Activated CD4-positive, alpha-beta T cell treated with anti-CD3 and anti-CD28 coated beads, Interleukin-2, amount 10 ng/mL, durations not matched to agents 24 days and 14 days (primary cell): ENCODE measurements at regions of chr4 and their contacts with region 1.

Region 1: GRCh38 chr4:54233277-54233696 is 4.2 kb downstream of the PDGFRA start:
- DNase-seq: peak; percentile 92
- H3K4me3 Mint-ChIP-seq: peak overlapping the region; percentile 75
- H3K27ac Mint-ChIP-seq: no peak overlapping the region
- H3K4me1 Mint-ChIP-seq: peaks cover 14% of the 10 kb centered on the region
- H3K27me3 Mint-ChIP-seq: peaks cover 55% of the 10 kb centered on the region

Region 2: GRCh38 chr4:52545099-52546069 is 1687.9 kb before region 1 on chr4:
- intact Hi-C with region 1: loop called (anchors 2 kb)
- DNase-seq: peak; percentile 88
- H3K4me3 Mint-ChIP-seq: no peak overlapping the region
- H3K27ac Mint-ChIP-seq: no peak overlapping the region
- H3K4me1 Mint-ChIP-seq: no peaks in the 10 kb centered on the region
- H3K27me3 Mint-ChIP-seq: peaks cover 3% of the 10 kb centered on the region

Region 3: DNA sequence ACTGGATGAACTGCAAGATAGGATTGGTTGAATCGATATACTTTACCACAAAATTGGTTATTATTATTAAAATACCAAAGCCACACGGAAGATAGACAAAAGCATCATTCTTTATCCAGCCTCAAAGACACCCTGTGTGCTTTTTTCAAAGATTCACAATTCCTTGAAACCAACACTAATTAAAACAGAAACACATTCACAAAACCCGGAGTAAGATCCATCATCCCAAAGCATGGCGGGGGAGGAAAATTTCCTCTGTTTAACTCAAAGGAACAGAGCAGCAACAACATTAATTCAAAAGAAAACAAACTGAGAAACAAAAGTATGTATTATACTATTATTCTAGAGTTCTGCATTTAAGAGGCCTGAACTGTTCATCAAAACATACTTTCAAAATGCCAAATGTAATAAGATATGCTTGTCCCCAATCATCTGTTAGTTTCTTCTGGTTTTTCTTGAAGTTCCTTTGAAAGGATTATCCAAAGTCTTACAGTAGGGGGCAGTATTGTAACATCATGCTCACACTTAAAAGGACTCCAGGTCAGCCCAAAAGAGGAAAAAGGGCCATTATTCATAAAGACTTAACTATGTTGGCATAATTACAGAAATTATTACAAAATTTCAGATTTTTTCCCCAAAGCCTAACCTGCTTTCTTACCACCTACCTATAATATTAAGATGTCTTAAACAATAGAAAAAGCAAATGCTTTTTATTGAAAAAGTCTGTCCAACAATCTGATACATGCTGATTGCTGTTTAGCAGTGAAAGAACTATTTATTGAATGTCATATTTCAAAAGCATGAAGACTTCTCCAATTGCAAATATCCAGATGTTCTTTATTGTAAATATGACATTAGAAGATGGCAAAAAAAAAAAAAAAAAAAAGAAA is 1036.2 kb before region 1 on chr4:
- intact Hi-C with region 1: loop called (anchors 1 kb)
- DNase-seq: peak; percentile 67
- H3K4me3 Mint-ChIP-seq: no peak overlapping the region
- H3K27ac Mint-ChIP-seq: no peak overlapping the region
- H3K4me1 Mint-ChIP-seq: no peaks in the 10 kb centered on the region
- H3K27me3 Mint-ChIP-seq: no peaks in the 10 kb centered on the region

Region 4: DNA sequence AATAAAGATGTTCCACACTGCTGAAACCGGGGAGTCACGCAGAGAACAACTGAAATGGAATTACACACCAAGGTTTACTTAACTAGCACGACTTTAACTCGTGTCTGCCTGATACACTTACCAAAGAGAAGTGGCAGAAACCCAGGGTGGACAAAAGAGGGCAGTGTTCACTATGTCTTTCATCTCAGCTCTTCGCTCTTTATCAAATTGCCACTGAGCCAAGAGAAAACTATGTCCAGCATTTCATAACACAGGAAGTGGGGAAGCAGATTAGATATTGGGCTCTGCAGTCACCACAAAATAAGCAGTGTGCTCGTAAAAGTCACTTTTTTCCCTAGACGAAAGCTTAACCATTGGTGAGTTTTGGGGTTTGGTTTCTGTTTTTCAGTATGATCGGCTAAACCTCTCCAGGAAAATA is 324.6 kb before region 1 on chr4:
- intact Hi-C with region 1: loop called (anchors 1 kb)
- DNase-seq: peak; percentile 68
- H3K4me3 Mint-ChIP-seq: no peak overlapping the region
- H3K27ac Mint-ChIP-seq: no peak overlapping the region
- H3K4me1 Mint-ChIP-seq: peaks cover 7% of the 10 kb centered on the region
- H3K27me3 Mint-ChIP-seq: peaks cover 34% of the 10 kb centered on the region

Region 5: DNA sequence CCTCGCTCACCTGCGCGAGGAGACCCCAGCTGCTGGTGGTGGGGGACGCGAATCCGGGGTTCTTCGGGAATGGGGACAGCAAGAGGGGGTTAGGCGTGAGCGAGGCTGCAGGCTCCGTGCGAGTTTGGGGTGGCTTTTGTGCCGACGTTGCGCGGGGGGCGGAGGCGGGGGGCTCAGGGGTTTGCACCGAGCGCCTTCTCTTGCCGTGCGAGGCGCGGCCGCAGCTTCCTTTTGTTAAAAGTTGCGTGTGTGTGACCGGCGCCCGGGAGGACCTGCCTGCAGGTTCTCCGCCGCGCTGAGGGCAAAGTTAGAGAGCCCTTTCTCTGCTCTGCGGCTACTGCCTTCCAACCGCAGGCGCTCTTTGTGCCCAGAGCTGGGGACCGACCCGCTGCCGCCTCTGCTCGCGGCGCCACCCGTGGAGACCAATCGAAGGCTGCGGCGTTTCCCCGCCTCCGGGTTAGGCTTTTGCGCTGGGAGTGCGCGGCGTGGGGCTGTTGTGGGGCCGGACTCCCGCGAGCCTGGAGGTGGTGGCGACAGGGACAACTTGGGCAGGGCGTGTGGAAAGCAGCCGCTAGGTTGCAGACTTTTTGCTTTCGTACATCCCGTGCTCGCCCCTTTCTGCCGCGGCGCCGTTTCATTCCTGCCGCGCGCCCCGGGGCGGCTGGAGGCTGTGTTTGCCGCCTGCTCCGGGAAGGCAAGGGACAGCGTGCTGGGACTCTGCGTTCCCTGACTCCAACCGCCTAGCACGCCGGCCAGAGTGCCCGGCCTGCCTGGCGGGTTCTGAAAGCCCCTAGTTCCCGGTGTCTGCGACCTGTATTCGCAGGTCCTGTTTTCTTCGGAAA is 425.2 kb after region 1 on chr4:
- intact Hi-C with region 1: loop called (anchors 5 kb)
- DNase-seq: peak; percentile 73
- H3K4me3 Mint-ChIP-seq: peak overlapping the region; percentile 81
- H3K27ac Mint-ChIP-seq: no peak overlapping the region
- H3K4me1 Mint-ChIP-seq: peaks cover 13% of the 10 kb centered on the region
- H3K27me3 Mint-ChIP-seq: peaks cover 66% of the 10 kb centered on the region